ENCODE measurements at regions of chr4 and their contacts with region 1.

Region 1: DNA sequence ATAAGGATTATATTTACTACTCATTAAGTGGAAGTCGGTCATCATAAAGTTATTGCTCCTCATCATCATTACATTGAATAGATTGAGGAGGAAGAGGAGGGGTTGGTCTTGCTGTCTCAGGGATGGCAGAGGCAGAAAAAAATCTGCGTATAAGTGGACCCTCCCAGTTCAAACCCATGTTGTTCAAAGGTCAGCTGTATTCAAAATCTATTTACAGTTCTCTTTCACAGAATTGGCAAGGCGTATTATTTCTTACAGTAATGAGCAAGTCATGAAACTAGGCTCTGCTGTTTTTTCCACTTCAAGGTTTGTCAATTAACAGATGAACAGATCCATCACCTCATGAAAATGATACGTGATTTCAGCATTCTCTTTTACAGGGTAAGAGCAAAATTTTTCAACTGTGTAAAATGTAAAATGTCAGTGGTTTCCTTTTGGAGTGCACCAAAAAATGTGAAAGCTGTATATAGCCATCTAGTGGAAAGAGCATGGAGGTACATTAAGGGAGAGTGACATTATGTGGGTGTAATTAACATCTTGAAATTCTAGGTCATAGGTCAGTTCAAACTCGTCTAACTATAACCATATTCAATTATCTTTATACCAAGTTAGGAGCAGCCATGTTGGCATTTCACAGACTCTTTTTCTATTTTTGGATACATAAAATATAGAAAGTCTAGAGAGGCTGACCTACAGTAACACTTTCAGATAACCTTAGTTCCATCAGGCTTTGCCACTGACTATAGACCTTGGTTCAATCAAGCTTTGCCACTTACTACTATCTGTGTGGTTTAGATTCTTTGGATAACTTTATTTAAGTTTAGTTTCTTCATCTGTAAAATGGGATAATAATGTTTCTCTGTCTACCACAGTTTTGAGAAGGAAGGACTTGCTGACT is 30.1 kb downstream of the NEIL3 start:
- DNase-seq: peak in 1 of 35 experiments; percentile 62
- ATAC-seq: peak; percentile 73 to 91 (median 78)
- H3K4me3 ChIP-seq: no peak overlapping the region
- H3K4me3 Mint-ChIP-seq: no peak overlapping the region
- H3K27ac ChIP-seq: no peak overlapping the region
- H3K27ac Mint-ChIP-seq: no peak overlapping the region
- H3K4me1 ChIP-seq: no peaks in the 10 kb centered on the region
- H3K4me1 Mint-ChIP-seq: peaks cover 4 to 15% (median 5%) of the 10 kb centered on the region in 3 donors
- H3K27me3 ChIP-seq: no peaks in the 10 kb centered on the region
- H3K27me3 Mint-ChIP-seq: no peaks in the 10 kb centered on the region

Region 2: DNA sequence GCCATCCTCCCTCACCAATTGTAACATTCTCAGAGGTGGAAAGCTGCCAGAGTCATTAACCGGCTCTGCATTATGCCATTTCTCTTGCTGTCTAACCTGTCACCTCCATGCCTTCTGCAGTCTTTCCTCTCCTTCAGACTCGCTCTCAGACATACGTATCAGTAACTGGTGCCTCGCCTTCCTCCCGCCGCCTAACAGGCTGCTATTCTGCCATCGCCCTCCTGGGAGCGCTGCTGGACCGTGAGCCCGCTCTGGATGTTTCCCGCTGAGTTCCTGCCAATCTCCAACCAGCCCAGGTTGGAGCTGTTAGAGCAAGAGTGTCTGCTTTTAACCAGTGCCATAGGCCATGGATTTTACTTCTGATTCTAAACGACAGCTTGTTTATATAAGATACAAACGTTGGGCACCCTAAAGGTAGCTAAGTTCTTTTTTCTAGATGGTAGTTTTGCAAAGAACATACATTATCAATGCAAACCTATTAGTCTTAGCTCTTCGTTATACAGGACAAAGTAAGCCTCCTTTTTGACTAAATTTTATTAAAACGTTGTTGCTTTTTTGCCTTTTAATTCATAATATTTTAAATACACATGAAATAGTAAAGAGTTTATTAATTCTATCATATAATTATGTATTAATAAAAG is 89.5 kb before region 1 on chr4:
- CTCF ChIA-PET with region 1: interaction called, 19 to 61 read pairs
- POLR2A ChIA-PET with region 1: no interaction called
- DNase-seq: peak; percentile 18 to 80 (median 54)
- ATAC-seq: peak; percentile 70 to 91 (median 82)
- H3K4me3 ChIP-seq: no peak overlapping the region
- H3K4me3 Mint-ChIP-seq: no peak overlapping the region
- H3K27ac ChIP-seq: no peak overlapping the region
- H3K27ac Mint-ChIP-seq: no peak overlapping the region
- H3K4me1 ChIP-seq: peaks cover 5 to 9% of the 10 kb centered on the region in 2 experiments
- H3K4me1 Mint-ChIP-seq: peaks cover 12 to 15% (median 12%) of the 10 kb centered on the region in 3 donors
- H3K27me3 ChIP-seq: no peaks in the 10 kb centered on the region
- H3K27me3 Mint-ChIP-seq: peaks cover 3 to 9% of the 10 kb centered on the region in 2 donors

Region 3: DNA sequence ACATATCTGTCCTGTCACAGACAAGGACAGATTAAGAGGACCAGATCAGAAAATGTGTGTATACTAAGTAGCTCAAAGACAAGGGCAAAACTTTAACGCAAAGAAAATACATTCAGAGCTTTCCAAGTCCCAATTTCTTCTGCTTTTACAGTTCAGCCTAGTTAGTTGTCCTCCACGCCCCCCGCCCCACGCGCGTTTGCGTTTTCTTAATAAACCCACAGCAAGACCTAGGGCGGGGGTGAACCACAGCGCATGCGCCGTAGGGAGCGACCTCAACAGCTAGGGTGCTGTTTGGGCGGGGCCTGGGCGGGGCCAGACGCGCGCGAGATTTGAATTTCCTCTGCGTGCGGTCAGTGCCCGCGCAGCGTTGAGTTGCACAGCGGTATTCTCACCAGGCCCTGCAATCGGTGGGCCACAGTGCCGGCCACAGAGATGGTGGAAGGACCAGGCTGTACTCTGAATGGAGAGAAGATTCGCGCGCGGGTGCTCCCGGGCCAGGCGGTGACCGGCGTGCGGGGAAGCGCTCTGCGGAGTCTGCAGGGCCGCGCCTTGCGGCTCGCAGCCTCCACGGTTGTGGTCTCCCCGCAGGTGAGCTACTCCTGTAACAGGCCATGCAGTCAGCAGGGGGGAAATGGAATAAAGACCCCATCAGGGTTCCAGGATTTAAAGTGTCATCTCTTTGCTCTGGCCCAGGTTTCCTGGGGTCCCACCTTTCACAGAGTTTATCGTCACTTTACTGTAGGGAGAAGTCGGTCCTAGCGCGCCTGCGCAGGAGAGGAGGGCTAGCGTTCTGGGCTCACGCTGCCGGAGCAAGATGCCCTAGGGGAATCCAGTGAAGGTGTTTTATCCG is 30.0 kb before region 1 on chr4 and contains the start of gene NEIL3:
- CTCF ChIA-PET with region 1: interaction called, 6 to 13 read pairs
- POLR2A ChIA-PET with region 1: interaction called, 4 read pairs
- DNase-seq: peak; percentile 83 to 96 (median 93)
- ATAC-seq: peak; percentile 87 to 91 (median 89)
- H3K4me3 ChIP-seq: peak within 1 kb of the TSS; percentile 79 to 94
- H3K4me3 Mint-ChIP-seq: peak within 1 kb of the TSS; percentile 80 to 93 (median 88)
- H3K27ac ChIP-seq: peak within 1 kb of the TSS; percentile 72
- H3K27ac Mint-ChIP-seq: peak within 1 kb of the TSS; percentile 65 to 79
- H3K4me1 ChIP-seq: peaks cover 8 to 16% of the 10 kb centered on the region in 2 experiments
- H3K4me1 Mint-ChIP-seq: peaks cover 17 to 34% (median 23%) of the 10 kb centered on the region in 3 donors
- H3K27me3 ChIP-seq: no peaks in the 10 kb centered on the region
- H3K27me3 Mint-ChIP-seq: no peaks in the 10 kb centered on the region
- total RNA-seq, gene NEIL3: 0.25 to 0.90 (median 0.44) TPM